Endothelial cell of umbilical vein (primary cell): ENCODE measurements at regions of chr3 and their contacts with region 1.

Region 1: GRCh38 chr3:112333002-112333380 is at the start of gene CD200:
- DNase-seq: peak; percentile 62
- H3K4me3 ChIP-seq: peak within 1 kb of the TSS; percentile 28 to 59 (median 56)
- H3K27ac ChIP-seq: no peak within 1 kb of the TSS
- H3K4me1 ChIP-seq: peaks cover 8% of the 10 kb centered on the region
- H3K27me3 ChIP-seq: peaks cover 0 to 6% of the 10 kb centered on the region in 2 experiments
- CTCF ChIP-seq: no peak
- POLR2A ChIP-seq: no peak
- total RNA-seq, gene CD200: 7.2 and 8.2 TPM in 2 replicates

Region 2: DNA sequence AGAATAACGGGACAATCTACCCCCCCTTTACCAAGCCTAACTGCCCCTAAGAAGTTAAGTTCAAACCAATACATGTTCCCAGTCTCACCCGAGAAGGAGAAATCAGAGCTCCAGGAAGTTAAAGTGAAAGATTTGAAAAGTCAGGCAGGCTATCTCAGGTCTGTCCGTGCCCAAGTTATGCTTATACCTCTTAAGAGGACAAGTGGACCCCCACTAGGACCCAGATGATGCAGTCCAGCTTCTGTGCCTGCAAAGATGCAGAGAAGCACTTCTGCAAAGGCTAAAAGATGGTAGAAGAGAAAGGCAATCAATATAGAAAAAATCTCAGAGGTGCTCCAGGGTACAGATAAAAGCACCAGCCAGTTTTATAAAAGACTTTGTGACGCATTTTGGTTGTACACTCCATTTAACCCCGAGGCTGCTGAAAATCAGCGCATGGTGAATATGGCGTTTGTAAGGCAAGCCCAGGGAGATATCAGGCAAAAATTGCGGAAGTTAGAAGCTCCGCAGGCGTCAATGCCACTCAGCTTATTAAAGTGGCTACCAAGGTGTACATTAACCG is 29.1 kb before region 1 on chr3:
- CTCF ChIA-PET with region 1: interaction called, 10 read pairs
- POLR2A ChIA-PET with region 1: no interaction called
- dilution Hi-C with region 1: no loop called
- intact Hi-C with region 1: no loop called
- DNase-seq: peak; percentile 53
- H3K4me3 ChIP-seq: peak overlapping the region; percentile 11 to 53 (median 43)
- H3K27ac ChIP-seq: no peak overlapping the region
- H3K4me1 ChIP-seq: peaks cover 8% of the 10 kb centered on the region
- H3K27me3 ChIP-seq: no peaks in the 10 kb centered on the region
- CTCF ChIP-seq: no peak
- POLR2A ChIP-seq: no peak

Region 3: DNA sequence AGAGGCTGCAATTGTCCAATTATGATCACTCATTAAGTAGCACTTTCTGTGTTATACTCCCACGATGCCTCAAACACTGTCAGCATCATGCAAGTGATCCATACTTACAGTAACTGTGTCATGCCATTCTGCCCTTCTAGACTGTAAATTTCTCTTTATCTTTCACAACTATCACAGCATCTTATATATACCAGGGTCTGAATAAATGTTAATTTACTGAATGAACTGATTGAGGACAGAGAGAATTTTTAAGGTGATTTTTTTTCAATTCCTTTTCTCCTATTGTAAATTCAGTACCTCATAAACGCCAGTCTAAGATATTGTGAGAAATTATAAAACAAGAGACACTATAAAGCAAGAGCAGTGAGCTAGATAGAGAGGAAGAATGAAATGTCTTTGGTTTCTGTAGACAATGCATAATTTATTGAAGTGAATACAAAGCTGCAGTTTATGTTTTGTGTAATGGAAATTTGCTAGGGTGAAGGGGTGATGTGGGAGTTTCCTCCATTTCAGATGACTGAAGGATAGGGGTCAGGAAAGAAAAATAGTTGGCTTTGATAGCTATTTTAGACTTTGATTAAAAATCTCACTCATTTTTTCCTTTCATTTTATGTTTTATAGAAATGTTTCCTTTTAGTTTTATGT is 17.3 kb after region 1 on chr3:
- CTCF ChIA-PET with region 1: interaction called, 20 read pairs
- POLR2A ChIA-PET with region 1: interaction called, 9 read pairs
- dilution Hi-C with region 1: no loop called
- intact Hi-C with region 1: loop called (anchors 2 kb)
- DNase-seq: peak; percentile 87
- H3K4me3 ChIP-seq: no peak overlapping the region
- H3K27ac ChIP-seq: peak overlapping the region; percentile 16
- H3K4me1 ChIP-seq: peaks cover 38% of the 10 kb centered on the region
- H3K27me3 ChIP-seq: no peaks in the 10 kb centered on the region
- CTCF ChIP-seq: no peak
- POLR2A ChIP-seq: no peak

Region 4: DNA sequence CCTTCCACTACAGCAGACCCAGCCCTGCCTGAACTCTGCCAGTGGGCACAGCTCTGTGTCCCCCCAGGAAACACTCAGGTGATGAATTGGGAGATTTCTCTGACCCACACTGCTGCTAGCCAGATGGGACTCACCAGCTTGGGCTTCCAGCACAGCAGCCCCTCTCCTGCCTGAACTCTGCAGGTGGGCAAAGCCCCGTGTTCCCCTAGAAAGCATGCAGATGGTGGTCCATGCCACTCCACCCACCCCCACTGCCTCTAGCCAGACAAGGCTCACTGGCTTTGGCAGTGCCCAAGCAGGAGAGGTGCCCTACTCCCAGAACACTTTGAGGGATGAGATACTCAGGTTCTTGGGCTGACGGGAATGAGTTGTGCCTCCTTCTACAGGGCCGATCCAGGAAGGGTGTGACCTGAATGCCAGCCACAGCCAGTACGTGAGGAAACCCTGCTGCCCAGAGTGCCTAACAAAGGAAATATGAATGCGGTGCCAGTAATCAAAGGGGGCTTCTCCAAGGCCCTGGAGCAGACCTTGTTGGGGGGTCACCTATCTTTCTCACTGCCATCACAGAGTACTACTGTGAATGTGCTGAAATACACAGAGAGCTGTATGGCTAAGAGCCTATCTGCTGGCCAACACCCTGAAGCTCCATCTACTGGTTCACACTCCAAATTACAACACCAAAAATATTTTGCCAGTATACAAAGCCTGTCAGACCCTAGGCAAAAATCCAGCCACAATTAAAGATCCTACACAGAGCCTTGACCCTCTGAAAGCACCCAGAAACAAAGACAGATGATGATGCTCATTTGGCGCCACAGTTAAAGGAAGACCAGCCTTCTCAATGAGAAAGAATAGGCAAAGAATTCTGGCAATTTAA is 104.4 kb after region 1 on chr3:
- CTCF ChIA-PET with region 1: interaction called, 40 read pairs
- POLR2A ChIA-PET with region 1: no interaction called
- dilution Hi-C with region 1: no loop called
- intact Hi-C with region 1: no loop called
- DNase-seq: peak; percentile 33
- H3K4me3 ChIP-seq: no peak overlapping the region
- H3K27ac ChIP-seq: no peak overlapping the region
- H3K4me1 ChIP-seq: no peaks in the 10 kb centered on the region
- H3K27me3 ChIP-seq: no peaks in the 10 kb centered on the region
- CTCF ChIP-seq: peak; percentile 36 to 41
- POLR2A ChIP-seq: no peak

Region 5: GRCh38 chr3:112847692-112848091 is 514.7 kb after region 1 on chr3:
- CTCF ChIA-PET with region 1: no interaction called
- POLR2A ChIA-PET with region 1: no interaction called
- dilution Hi-C with region 1: no loop called
- intact Hi-C with region 1: no loop called
- DNase-seq: no peak
- H3K4me3 ChIP-seq: no peak overlapping the region
- H3K27ac ChIP-seq: no peak overlapping the region
- H3K4me1 ChIP-seq: no peaks in the 10 kb centered on the region
- H3K27me3 ChIP-seq: no peaks in the 10 kb centered on the region
- CTCF ChIP-seq: no peak
- POLR2A ChIP-seq: no peak